Dorsolateral prefrontal cortex (tissue), 120 donors: ENCODE measurements at regions of chr6 and their contacts with region 1.

Region 1: GRCh38 chr6:149037051-149037671 is 280.4 kb upstream of the TAB2 start:
- DNase-seq: peak in 1 of 10 donors; percentile 29
- H3K4me3 ChIP-seq: no peak overlapping the region
- H3K27ac ChIP-seq: peak overlapping the region in 13 of 59 donors; percentile 3 to 64 (median 27)
- H3K27me3 ChIP-seq: no peaks in the 10 kb centered on the region
- CTCF ChIP-seq: no peak

Region 2: GRCh38 chr6:149082286-149082707 is 45.1 kb after region 1 on chr6:
- intact Hi-C with region 1: loop called in 1 of 2 experiments (anchors 5 kb)
- DNase-seq: peak; percentile 60 to 94 (median 79)
- H3K4me3 ChIP-seq: no peak overlapping the region
- H3K27ac ChIP-seq: peak overlapping the region in 2 of 59 donors; percentile 31 to 56
- H3K27me3 ChIP-seq: no peaks in the 10 kb centered on the region
- CTCF ChIP-seq: peak; percentile 59 to 97 (median 88)

Region 3: DNA sequence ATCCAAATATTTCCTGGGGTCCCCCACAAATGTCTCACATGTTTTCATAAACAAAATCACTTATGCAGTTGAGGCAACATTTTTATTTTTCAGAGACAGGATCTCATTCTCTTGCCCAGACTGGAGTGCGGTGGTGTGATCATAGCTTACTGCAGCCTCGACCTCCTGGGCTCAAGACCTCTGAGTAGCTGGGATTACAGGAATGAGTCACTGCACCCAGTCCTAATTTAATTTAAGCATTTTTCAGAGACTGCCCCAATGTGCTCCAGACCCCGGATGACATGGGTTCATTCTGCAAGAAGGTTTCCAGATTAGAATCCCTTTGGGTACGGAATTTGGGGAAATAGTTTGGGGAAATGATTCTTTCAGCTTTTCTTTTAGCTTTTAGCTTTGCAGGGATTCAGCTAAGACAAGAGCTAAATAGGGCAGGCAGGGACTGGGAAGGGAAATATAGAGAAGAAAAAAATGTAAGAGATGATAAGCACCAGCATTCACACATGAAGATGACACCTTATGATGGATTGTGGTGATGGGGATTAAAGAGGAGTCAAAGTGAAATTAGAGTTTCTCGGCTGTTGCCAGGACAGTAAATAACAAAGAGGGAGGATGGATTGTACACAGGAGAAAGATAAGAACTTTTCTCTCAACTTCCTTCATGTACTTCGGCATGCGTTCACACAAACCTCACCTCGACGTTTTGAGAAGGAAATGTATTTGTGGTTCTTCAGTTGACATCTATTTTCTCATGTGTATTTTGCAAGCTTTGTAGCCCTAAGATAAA is 111.0 kb after region 1 on chr6:
- intact Hi-C with region 1: no loop called
- DNase-seq: no peak
- H3K4me3 ChIP-seq: no peak overlapping the region
- H3K27ac ChIP-seq: no peak overlapping the region
- H3K27me3 ChIP-seq: peaks cover 0 to 3% (median 0%) of the 10 kb centered on the region in 45 donors
- CTCF ChIP-seq: no peak